ENCODE measurements at regions of chr20 and their contacts with region 1.

Region 1: DNA sequence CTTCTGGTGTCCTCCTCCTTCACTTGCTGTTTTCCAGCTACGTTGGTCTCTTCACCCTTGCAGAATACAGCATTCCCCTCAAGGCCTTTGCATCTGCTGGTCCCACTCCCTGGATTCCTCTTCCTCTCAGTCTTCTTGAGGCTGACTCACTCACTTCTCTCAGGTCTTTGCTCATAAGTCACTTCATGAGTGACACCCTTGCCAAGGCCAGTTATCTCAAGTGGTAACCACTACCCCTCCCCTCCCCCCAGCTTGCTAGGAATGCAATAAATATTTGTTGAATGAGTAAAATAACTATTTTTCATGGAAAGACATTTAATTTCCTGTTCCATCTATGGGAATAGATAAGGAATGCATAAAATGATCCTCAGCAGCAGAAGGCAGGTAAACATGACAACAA is 131.7 kb downstream of the PLCB4 start:
- DNase-seq: no peak
- H3K4me3 ChIP-seq: no peak overlapping the region
- H3K4me3 Mint-ChIP-seq: no peak overlapping the region
- H3K27ac Mint-ChIP-seq: no peak overlapping the region
- H3K4me1 ChIP-seq: no peaks in the 10 kb centered on the region; the same call in 1 of the 2 replicates
- H3K4me1 Mint-ChIP-seq: no peaks in the 10 kb centered on the region
- H3K27me3 ChIP-seq: no peaks in the 10 kb centered on the region
- H3K27me3 Mint-ChIP-seq: peaks cover 3% of the 10 kb centered on the region
- CTCF ChIP-seq: no peak

Region 2: GRCh38 chr20:8960241-8960640 is 240.4 kb before region 1 on chr20:
- CTCF ChIA-PET with region 1: no interaction called
- POLR2A ChIA-PET with region 1: interaction called, 13 read pairs
- intact Hi-C with region 1: no loop called
- DNase-seq: no peak
- H3K4me3 ChIP-seq: no peak overlapping the region
- H3K4me3 Mint-ChIP-seq: no peak overlapping the region
- H3K27ac Mint-ChIP-seq: no peak overlapping the region
- H3K4me1 ChIP-seq: no peaks in the 10 kb centered on the region
- H3K4me1 Mint-ChIP-seq: peaks cover 6% of the 10 kb centered on the region
- H3K27me3 ChIP-seq: no peaks in the 10 kb centered on the region
- H3K27me3 Mint-ChIP-seq: peaks cover 4% of the 10 kb centered on the region
- CTCF ChIP-seq: no peak

Region 3: GRCh38 chr20:9078826-9079731 is 121.5 kb before region 1 on chr20:
- CTCF ChIA-PET with region 1: no interaction called
- POLR2A ChIA-PET with region 1: no interaction called
- intact Hi-C with region 1: no loop called
- DNase-seq: no peak
- H3K4me3 ChIP-seq: no peak overlapping the region
- H3K4me3 Mint-ChIP-seq: no peak overlapping the region
- H3K27ac Mint-ChIP-seq: no peak overlapping the region
- H3K4me1 ChIP-seq: no peaks in the 10 kb centered on the region
- H3K4me1 Mint-ChIP-seq: no peaks in the 10 kb centered on the region
- H3K27me3 ChIP-seq: no peaks in the 10 kb centered on the region
- H3K27me3 Mint-ChIP-seq: peaks cover 4% of the 10 kb centered on the region
- CTCF ChIP-seq: no peak

Region 4: GRCh38 chr20:9306517-9306916 is 105.9 kb after region 1 on chr20:
- CTCF ChIA-PET with region 1: no interaction called
- POLR2A ChIA-PET with region 1: no interaction called
- intact Hi-C with region 1: no loop called
- DNase-seq: no peak
- H3K4me3 ChIP-seq: no peak overlapping the region
- H3K4me3 Mint-ChIP-seq: no peak overlapping the region
- H3K27ac Mint-ChIP-seq: no peak overlapping the region
- H3K4me1 ChIP-seq: 0 out of 2 replicates have a peak, but pooled peaks cover 5% of the 10 kb centered on the region
- H3K4me1 Mint-ChIP-seq: no peaks in the 10 kb centered on the region
- H3K27me3 ChIP-seq: no peaks in the 10 kb centered on the region
- H3K27me3 Mint-ChIP-seq: peaks cover 5% of the 10 kb centered on the region
- CTCF ChIP-seq: no peak